Tibial artery (tissue), 4 donors: ENCODE measurements at regions of chr16 and their contacts with region 1.

Region 1: DNA sequence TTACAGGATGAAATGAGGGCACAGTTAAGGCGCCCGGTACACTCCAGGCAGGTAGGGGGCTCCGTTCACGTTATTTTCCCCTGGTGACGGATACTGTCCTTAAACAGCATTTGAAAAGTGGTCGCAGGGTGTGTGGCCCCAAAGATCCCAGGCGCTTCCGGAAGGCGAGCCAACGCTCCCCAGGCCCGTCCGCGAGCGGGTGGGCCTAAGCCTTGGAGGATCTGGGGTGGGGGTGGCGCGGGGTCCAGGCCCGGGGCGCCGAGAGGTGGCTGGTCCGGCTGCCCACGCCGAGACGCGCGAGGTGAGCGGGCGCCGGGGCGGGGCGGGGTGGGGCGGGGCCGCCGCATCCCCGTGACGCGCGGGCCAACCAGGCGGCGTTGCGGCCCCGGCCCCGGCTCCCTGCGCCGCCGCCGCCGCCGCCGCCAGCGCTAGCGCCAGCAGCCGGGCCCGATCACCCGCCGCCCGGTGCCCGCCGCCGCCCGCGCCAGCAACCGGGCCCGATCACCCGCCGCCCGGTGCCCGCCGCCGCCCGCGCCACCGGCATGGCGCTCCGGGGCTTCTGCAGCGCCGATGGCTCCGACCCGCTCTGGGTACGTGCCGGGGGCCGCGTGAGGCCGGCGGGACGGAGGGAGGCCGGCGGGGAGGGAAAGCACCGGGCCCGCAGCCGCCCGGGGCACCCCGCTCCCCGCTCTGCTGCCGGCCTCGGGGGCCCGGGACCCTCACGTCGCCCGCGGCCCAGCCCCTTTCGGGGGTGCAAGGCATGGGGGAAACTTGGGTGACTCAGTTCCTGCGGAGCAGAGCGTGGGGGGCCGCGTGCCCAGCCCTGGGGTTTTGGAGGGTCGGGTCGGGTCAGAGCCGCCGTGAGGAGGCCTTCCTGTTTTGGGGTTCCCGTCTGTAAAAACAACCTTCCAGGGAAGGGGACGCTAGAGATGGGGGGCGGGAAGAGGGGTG is at the start of gene ABCC1:
- DNase-seq: no peak
- H3K4me3 ChIP-seq: peak within 1 kb of the TSS; percentile 83 to 93
- H3K27ac ChIP-seq: peak within 1 kb of the TSS; percentile 74 to 87
- H3K4me1 ChIP-seq: peaks cover 0 to 54% (median 28%) of the 10 kb centered on the region in 4 donors
- H3K27me3 ChIP-seq: no peaks in the 10 kb centered on the region
- CTCF ChIP-seq: no peak

Region 2: GRCh38 chr16:15899538-15900100 is 49.9 kb before region 1 on chr16:
- intact Hi-C with region 1: no loop called
- DNase-seq: no peak
- H3K4me3 ChIP-seq: no peak overlapping the region
- H3K27ac ChIP-seq: no peak overlapping the region
- H3K4me1 ChIP-seq: no peaks in the 10 kb centered on the region
- H3K27me3 ChIP-seq: no peaks in the 10 kb centered on the region
- CTCF ChIP-seq: no peak

Region 3: DNA sequence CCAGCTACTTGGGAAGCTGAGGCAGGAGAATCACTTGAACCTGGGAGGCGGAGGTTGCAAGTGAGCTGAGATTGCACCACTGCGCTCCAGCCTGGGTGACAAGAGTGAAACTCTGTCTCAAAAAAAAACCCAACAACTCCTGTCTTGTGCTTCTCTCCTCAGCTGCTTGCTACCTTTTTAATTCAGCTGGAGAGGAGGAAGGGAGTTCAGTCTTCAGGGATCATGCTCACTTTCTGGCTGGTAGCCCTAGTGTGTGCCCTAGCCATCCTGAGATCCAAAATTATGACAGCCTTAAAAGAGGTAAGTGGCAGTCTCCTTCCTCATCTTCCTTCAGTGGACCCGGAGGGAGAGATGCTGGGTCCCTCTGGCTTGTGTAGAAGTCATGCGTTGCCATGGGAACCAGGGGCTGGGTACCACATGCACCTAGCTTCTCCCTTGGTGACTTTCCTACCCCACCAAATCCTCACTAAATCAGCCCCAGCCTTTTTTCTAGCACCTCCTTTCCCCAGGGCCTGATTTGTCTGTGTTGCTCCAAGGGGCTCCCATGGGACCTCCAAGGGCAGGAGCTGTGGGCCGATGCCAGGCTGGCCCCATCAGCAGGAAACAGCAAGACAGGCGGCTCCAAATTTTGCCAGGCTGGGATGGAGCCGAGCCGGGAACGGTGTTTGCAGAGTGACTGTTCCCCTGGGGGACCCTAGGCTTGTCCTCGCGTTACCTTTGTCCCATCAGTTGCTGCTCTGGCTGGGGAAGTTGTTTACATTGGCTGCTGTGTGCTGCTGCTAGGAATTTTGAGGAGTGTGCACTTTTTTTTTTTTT is 65.1 kb after region 1 on chr16:
- intact Hi-C with region 1: loop called (anchors 5 kb)
- DNase-seq: peak; percentile 87 to 98
- H3K4me3 ChIP-seq: no peak overlapping the region
- H3K27ac ChIP-seq: peak overlapping the region; percentile 32 to 54
- H3K4me1 ChIP-seq: peaks cover 0 to 47% (median 20%) of the 10 kb centered on the region in 4 donors
- H3K27me3 ChIP-seq: no peaks in the 10 kb centered on the region
- CTCF ChIP-seq: no peak

Region 4: DNA sequence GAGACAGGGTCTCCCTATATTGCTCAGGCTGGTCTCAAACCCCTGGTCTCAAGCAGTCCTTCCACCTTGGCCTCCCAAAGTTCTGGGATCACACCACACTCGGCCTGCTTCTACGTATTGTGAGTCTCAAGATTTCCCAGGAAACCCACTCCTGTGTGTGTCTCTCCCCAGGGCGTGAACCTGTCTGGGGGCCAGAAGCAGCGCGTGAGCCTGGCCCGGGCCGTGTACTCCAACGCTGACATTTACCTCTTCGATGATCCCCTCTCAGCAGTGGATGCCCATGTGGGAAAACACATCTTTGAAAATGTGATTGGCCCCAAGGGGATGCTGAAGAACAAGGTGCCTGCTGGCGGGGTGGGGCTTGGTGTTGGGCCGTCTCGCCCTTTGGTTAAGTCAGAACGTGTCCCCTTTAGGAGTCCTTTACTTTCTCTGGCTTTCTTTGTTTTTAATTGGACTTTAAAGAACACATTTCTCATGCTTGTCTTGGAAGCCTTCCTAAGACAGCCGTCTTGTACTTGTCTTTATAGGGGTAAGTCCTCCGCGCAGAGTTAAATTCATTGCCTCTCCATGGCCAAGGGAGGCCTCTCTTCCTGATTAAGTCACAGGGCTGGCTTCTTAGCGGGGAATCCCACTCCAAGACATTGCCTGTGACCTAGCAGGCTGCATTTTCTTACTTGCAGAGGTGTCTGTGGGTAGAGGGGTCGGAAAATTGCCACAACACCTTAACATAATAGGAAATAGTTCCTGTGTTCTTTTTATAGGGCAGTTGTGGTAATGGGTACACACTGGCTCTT is 137.4 kb after region 1 on chr16:
- intact Hi-C with region 1: loop called (anchors 5 kb)
- DNase-seq: no peak
- H3K4me3 ChIP-seq: no peak overlapping the region
- H3K27ac ChIP-seq: peak overlapping the region; percentile 68 to 73
- H3K4me1 ChIP-seq: peaks cover 0 to 35% (median 24%) of the 10 kb centered on the region in 4 donors
- H3K27me3 ChIP-seq: no peaks in the 10 kb centered on the region
- CTCF ChIP-seq: no peak

Region 5: GRCh38 chr16:16183562-16183961 is 234.1 kb after region 1 on chr16:
- intact Hi-C with region 1: no loop called
- DNase-seq: no peak
- H3K4me3 ChIP-seq: no peak overlapping the region
- H3K27ac ChIP-seq: no peak overlapping the region
- H3K4me1 ChIP-seq: no peaks in the 10 kb centered on the region
- H3K27me3 ChIP-seq: peaks cover 0 to 4% of the 10 kb centered on the region in 2 donors
- CTCF ChIP-seq: no peak